Activated CD8-positive, alpha-beta T cell treated with anti-CD3 and anti-CD28 coated beads for 36 hours (primary cell): ENCODE measurements at regions of chrX and their contacts with region 1.

Region 1: DNA sequence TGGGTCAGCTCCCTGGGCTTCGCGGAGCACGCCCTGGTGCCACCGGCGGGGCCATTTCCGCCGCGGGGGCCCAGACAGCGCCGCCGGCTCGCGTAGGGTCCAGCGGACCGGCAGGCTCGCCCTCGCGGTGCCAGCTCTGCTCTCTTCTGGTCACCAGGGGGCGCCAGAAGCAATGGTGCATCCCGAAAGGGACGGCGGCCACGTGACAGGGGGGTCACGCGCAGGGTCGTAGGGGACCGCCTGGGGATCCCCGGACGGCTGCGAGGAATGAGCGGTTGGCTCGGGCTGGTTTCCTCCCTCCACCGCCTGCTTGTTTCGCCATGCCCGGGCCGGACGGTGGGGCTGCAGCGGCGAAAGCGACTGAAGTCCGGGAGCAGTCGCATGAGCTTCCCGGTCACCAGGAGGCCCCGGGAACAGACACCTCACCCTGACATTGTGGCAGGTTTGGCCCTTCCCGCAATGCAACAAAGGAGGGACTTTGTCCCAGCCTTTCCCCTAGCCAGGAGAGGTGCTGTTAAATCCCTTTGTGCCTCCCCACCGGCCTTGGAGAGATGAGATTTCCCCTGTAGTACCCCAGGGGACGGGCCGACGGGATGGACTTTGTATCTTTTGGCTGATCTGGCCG is 15.8 kb downstream of the ZCCHC12 start:
- DNase-seq: peak; percentile 79
- ATAC-seq: peak; percentile 81
- H3K4me3 Mint-ChIP-seq: peak overlapping the region; percentile 46
- H3K27ac Mint-ChIP-seq: no peak overlapping the region
- H3K4me1 Mint-ChIP-seq: no peaks in the 10 kb centered on the region
- H3K27me3 Mint-ChIP-seq: peaks cover 18% of the 10 kb centered on the region
- CTCF ChIP-seq: peak; percentile 77

Region 2: GRCh38 chrX:118824173-118824730 is 15.2 kb before region 1 on chrX:
- CTCF ChIA-PET with region 1: interaction called, 14 read pairs
- POLR2A ChIA-PET with region 1: no interaction called
- intact Hi-C with region 1: no loop called
- DNase-seq: peak; percentile 3
- ATAC-seq: no peak
- H3K4me3 Mint-ChIP-seq: peak overlapping the region; percentile 59
- H3K27ac Mint-ChIP-seq: no peak overlapping the region
- H3K4me1 Mint-ChIP-seq: peaks cover 23% of the 10 kb centered on the region
- H3K27me3 Mint-ChIP-seq: peaks cover 43% of the 10 kb centered on the region
- CTCF ChIP-seq: no peak

Region 3: GRCh38 chrX:118893923-118894322 is 54.5 kb after region 1 on chrX:
- CTCF ChIA-PET with region 1: no interaction called
- POLR2A ChIA-PET with region 1: no interaction called
- intact Hi-C with region 1: no loop called
- DNase-seq: no peak
- ATAC-seq: no peak
- H3K4me3 Mint-ChIP-seq: no peak overlapping the region
- H3K27ac Mint-ChIP-seq: no peak overlapping the region
- H3K4me1 Mint-ChIP-seq: no peaks in the 10 kb centered on the region
- H3K27me3 Mint-ChIP-seq: no peaks in the 10 kb centered on the region
- CTCF ChIP-seq: no peak

Region 4: DNA sequence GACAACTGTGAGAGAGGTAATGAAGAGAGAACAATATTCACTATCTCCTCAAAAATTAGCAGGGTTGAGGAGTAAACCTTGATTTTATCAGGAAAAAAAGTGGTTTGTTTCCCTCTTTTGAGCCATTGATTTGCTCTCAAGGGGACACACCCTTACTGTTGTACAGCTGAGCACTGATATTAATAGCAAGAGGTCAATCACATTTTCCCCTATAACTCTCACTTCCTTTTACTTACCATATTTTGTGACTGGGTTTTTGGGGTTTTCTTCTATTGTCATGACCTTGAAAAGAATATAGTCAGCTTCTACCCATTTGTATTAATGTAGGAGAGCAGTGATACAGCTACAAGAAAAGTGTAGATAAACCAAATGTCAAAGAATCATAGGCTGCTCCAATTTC is 64.8 kb after region 1 on chrX:
- CTCF ChIA-PET with region 1: no interaction called
- POLR2A ChIA-PET with region 1: no interaction called
- intact Hi-C with region 1: no loop called
- DNase-seq: no peak
- ATAC-seq: no peak
- H3K4me3 Mint-ChIP-seq: no peak overlapping the region
- H3K27ac Mint-ChIP-seq: no peak overlapping the region
- H3K4me1 Mint-ChIP-seq: no peaks in the 10 kb centered on the region
- H3K27me3 Mint-ChIP-seq: no peaks in the 10 kb centered on the region
- CTCF ChIP-seq: no peak